ENCODE measurements at regions of chr2 and their contacts with region 1.

Region 1: DNA sequence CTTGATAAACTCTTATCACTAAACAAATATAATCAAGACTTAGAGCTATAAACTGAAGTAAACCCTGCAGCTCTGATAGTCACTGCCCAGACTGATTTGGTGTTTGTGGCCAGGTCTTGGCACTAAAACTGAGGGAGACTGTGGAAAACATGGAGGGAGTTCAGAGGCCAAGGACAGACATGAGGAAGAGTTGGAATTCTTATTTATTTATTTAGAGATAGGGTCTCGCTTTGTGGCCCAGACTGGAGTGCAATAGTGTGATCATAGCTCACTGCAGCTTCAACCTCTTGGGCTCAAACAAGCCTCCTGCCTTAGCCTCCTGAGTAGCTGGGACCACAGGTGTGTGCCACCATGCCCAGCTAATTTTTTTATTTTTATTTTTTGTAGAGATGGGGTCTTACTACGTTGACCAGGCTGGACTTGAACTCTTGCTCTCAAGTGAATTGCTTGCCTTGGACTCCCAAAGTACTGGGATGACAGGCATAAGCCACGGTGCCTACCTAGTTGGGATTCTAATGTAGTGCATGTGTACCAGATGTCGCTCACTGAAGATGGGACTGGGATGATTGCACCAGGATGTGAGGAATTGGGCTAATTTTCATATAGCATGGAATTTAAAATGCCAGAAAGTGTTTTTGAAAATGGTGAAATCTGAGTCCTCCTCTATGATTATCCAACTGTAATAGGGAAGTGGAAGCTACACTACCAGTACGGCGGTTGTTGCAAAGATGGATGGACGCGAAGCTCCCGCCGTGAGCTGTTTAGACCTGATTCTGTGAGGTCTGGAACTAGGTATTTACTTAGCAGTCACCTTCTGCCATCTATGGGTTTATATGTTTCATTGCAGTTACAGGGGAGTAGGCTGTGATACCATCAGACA is 52.7 kb upstream of the CTLA4 start:
- DNase-seq: peak; percentile 76
- ATAC-seq: peak; percentile 70
- H3K4me3 Mint-ChIP-seq: peak overlapping the region; percentile 54
- H3K27ac Mint-ChIP-seq: peak overlapping the region; percentile 80
- H3K4me1 Mint-ChIP-seq: peaks cover 63% of the 10 kb centered on the region
- H3K27me3 Mint-ChIP-seq: no peaks in the 10 kb centered on the region

Region 2: DNA sequence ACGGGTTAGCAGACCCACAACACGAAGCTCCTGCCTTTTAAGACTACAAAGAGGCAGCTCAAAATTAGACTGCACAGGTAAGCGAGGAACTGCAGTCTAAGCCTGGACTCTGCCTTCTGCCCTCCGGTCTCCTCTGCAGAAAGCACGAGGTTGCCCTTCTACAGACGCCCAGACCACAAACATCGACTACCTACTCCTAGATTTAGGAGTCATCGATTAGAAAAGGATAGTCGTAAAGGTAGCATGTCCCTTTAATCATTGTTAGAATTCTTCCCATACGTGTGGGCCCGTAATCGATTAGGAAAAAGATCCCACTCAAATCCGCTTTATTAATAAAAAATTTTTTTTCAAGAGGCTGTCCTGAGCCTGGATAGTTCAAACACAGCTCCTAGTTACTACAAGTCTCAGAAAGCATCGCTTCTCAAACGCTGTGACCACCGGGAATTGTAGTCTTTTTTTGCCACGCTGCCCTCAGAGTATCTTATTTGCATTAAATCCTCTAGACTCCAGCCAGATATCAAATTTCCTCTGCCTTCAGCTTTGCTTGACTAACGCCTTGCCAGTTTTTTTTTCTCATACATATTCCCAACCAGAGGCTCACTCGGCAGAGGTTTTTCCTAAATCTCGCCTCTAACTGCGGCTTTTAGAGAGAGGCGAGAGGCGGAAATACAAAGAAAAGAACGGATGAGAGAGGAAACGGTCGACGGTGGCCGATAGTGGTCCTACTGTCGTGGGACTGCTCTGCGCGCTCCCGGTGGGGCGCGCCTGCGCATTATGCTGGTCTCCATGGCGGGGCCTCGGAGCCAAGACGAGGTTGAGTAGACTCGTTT is 903.2 kb before region 1 on chr2 and contains the starts of genes CARF and WDR12:
- CTCF ChIA-PET with region 1: no interaction called
- POLR2A ChIA-PET with region 1: no interaction called
- intact Hi-C with region 1: loop called in 1 of 2 experiments (anchors 10 kb)
- DNase-seq: peak; percentile 96
- ATAC-seq: peak; percentile 84
- H3K4me3 Mint-ChIP-seq: peak within 1 kb of the TSS; percentile 84
- H3K27ac Mint-ChIP-seq: peak within 1 kb of the TSS; percentile 95
- H3K4me1 Mint-ChIP-seq: peaks cover 30% of the 10 kb centered on the region
- H3K27me3 Mint-ChIP-seq: no peaks in the 10 kb centered on the region
- total RNA-seq, gene CARF: 6.2 to 9.0 TPM
- total RNA-seq, gene WDR12: 92.5 to 129 TPM

Region 3: GRCh38 chr2:203484266-203485112 is 330.4 kb before region 1 on chr2:
- CTCF ChIA-PET with region 1: interaction called, 41 read pairs
- POLR2A ChIA-PET with region 1: no interaction called
- intact Hi-C with region 1: loop called (anchors 1 kb)
- DNase-seq: peak; percentile 66
- ATAC-seq: peak; percentile 91
- H3K4me3 Mint-ChIP-seq: no peak overlapping the region
- H3K27ac Mint-ChIP-seq: peak overlapping the region; percentile 62
- H3K4me1 Mint-ChIP-seq: peaks cover 11% of the 10 kb centered on the region
- H3K27me3 Mint-ChIP-seq: no peaks in the 10 kb centered on the region

Region 4: DNA sequence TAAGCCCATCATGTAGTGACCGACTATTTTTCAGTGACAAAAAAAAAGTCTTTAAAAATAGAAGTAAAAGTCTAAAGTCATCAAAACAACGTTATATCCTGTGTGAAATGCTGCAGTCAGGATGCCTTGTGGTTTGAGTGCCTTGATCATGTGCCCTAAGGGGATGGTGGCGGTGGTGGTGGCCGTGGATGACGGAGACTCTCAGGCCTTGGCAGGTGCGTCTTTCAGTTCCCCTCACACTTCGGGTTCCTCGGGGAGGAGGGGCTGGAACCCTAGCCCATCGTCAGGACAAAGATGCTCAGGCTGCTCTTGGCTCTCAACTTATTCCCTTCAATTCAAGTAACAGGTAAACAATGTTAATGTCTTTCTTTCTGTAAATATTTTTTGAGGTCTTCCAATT is 108.5 kb before region 1 on chr2 and contains the start of gene CD28:
- CTCF ChIA-PET with region 1: interaction called, 14 read pairs
- POLR2A ChIA-PET with region 1: interaction called, 7 read pairs
- intact Hi-C with region 1: loop called (anchors 1 to 2 kb)
- DNase-seq: peak; percentile 95
- ATAC-seq: peak; percentile 75
- H3K4me3 Mint-ChIP-seq: peak within 1 kb of the TSS; percentile 84
- H3K27ac Mint-ChIP-seq: peak within 1 kb of the TSS; percentile 100
- H3K4me1 Mint-ChIP-seq: peaks cover 44% of the 10 kb centered on the region
- H3K27me3 Mint-ChIP-seq: no peaks in the 10 kb centered on the region
- total RNA-seq, gene CD28: 175 TPM

Region 5: GRCh38 chr2:203751685-203752271 is 63.1 kb before region 1 on chr2:
- CTCF ChIA-PET with region 1: interaction called, 21 read pairs
- POLR2A ChIA-PET with region 1: interaction called, 5 read pairs
- intact Hi-C with region 1: no loop called
- DNase-seq: no peak
- ATAC-seq: no peak
- H3K4me3 Mint-ChIP-seq: no peak overlapping the region
- H3K27ac Mint-ChIP-seq: peak overlapping the region; percentile 77
- H3K4me1 Mint-ChIP-seq: peaks cover 67% of the 10 kb centered on the region
- H3K27me3 Mint-ChIP-seq: no peaks in the 10 kb centered on the region

Region 6: DNA sequence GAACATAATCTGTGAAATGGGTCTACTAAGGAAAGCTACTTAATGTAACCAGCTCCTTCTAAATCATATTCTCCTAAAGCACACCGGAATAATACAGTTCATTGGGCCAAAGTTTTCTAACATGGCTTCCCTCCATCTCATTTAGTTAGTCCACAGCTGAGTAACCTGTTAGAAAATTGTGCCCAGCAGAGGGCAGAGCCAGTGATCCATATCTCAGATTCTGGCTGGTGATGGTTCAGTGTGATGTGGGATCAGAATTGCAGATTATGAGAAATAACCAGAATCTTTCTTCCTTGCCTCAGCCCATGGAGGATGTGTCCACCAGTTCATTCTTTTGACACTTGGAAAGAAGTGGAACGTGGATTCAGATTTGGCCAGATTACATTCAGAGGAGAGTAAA is 43.3 kb after region 1 on chr2:
- CTCF ChIA-PET with region 1: interaction called, 20 read pairs
- POLR2A ChIA-PET with region 1: interaction called, 5 read pairs
- intact Hi-C with region 1: no loop called
- DNase-seq: peak; percentile 62
- ATAC-seq: peak; percentile 57
- H3K4me3 Mint-ChIP-seq: peak overlapping the region; percentile 15
- H3K27ac Mint-ChIP-seq: peak overlapping the region; percentile 66
- H3K4me1 Mint-ChIP-seq: peaks cover 85% of the 10 kb centered on the region
- H3K27me3 Mint-ChIP-seq: no peaks in the 10 kb centered on the region

Region 7: GRCh38 chr2:204416228-204416627 is 601.3 kb after region 1 on chr2:
- CTCF ChIA-PET with region 1: no interaction called
- POLR2A ChIA-PET with region 1: no interaction called
- intact Hi-C with region 1: no loop called
- DNase-seq: no peak
- ATAC-seq: no peak
- H3K4me3 Mint-ChIP-seq: no peak overlapping the region
- H3K27ac Mint-ChIP-seq: no peak overlapping the region
- H3K4me1 Mint-ChIP-seq: no peaks in the 10 kb centered on the region
- H3K27me3 Mint-ChIP-seq: peaks cover 16% of the 10 kb centered on the region